GM10248 (cell line): ENCODE measurements at regions of chr11 and their contacts with region 1.

Region 1: GRCh38 chr11:119044708-119045107 is 12.3 kb downstream of the HYOU1 start:
- DNase-seq: no peak
- CTCF ChIP-seq: no peak

Region 2: DNA sequence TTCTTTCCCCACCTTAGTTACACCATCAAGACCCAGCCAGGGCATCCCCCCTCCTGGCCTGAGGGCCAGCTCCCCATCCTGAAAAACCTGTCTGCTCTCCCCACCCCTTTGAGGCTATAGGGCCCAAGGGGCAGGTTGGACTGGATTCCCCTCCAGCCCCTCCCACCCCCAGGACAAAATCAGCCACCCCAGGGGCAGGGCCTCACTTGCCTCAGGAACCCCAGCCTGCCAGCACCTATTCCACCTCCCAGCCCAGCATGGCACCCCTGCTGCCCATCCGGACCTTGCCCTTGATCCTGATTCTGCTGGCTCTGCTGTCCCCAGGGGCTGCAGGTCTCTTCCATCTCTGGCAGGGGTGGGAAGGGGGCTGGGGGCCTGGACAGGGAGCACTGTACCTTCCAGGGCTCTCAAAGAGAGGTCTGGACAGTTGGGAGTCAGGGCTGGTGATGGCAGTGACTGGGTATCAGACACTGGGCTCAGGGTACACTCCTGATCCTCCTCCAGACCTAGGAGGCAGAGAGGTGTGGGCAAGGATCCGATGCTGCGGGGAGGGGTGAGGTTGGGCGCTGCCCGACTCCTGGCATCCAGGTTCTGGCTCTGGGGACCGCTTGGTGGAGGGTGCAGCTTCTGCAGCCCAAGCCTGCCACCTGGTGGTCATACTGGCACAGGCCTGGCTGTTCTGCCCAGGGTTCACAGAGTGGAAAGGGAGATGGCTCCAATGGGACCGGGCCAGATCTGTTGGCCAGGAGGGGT is 88.4 kb before region 1 on chr11 and contains the start of gene UPK2:
- CTCF ChIA-PET with region 1: no interaction called
- POLR2A ChIA-PET with region 1: no interaction called
- DNase-seq: peak; percentile 94
- CTCF ChIP-seq: peak; percentile 99

Region 3: GRCh38 chr11:118980191-118980881 is 64.4 kb before region 1 on chr11:
- CTCF ChIA-PET with region 1: no interaction called
- POLR2A ChIA-PET with region 1: no interaction called
- DNase-seq: no peak
- CTCF ChIP-seq: no peak

Region 4: DNA sequence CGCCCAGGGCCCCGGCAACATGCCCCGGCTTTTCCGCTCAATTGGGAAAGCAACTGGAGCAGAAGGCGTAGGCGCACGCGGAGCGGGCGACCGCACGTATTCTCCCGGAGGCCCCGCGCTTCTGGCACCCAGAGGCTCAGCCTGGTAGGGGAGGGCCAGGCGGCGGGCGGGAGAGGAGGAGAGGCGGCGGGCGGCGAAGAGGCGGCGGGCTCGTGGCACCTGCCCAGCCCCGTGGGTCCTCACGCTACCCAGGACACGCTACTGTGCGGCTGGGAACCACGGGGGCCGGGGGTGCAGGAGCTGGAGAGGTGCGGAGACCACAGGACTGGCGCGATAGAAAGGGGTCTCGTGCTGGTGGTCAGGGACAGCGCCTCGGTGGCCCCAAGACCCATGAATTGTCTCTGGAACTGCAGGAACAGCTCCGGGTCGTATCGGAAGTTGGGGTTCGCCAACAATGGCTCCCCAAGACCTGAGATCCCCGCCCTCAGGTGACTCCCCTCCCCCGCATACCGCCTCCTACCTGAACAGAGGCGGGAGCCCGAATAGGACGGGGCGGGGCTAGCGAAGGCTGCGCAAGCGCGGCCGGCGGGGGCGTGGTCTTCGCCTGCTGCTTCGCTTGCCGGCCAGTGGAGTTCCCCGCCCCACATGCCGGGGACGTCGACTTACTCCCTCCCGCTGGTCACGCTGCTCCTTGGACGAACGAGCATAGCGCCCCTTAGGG is 14.2 kb before region 1 on chr11 and contains the start of gene SLC37A4:
- CTCF ChIA-PET with region 1: interaction called, 47 read pairs
- POLR2A ChIA-PET with region 1: interaction called, 4 read pairs
- DNase-seq: peak; percentile 99
- CTCF ChIP-seq: peak; percentile 96

Region 5: GRCh38 chr11:119057000-119057769 is 12.5 kb after region 1 on chr11 and contains the start of gene HYOU1:
- CTCF ChIA-PET with region 1: interaction called, 19 read pairs
- POLR2A ChIA-PET with region 1: interaction called, 5 read pairs
- DNase-seq: peak; percentile 99
- CTCF ChIP-seq: peak; percentile 18

Region 6: GRCh38 chr11:119699227-119699626 is 654.5 kb after region 1 on chr11:
- CTCF ChIA-PET with region 1: no interaction called
- POLR2A ChIA-PET with region 1: no interaction called
- DNase-seq: no peak
- CTCF ChIP-seq: no peak